Naive thymus-derived CD4-positive, alpha-beta T cell (primary cell): ENCODE measurements at regions of chr4 and their contacts with region 1.

Region 1: GRCh38 chr4:54941994-54942552 is 183.3 kb downstream of the KDR start:
- DNase-seq: peak in 8 of 9 donors; percentile 22 to 82 (median 71)
- ATAC-seq: peak; percentile 79
- H3K4me3 ChIP-seq: peak overlapping the region; percentile 36
- H3K4me3 Mint-ChIP-seq: peak overlapping the region; percentile 71 to 85 (median 79)
- H3K27ac ChIP-seq: peak overlapping the region; percentile 87
- H3K27ac Mint-ChIP-seq: peak overlapping the region; percentile 79 to 99 (median 97)
- H3K4me1 ChIP-seq: peaks cover 0 to 37% of the 10 kb centered on the region in 2 donors
- H3K4me1 Mint-ChIP-seq: peaks cover 27 to 77% (median 58%) of the 10 kb centered on the region in 7 donors
- H3K27me3 ChIP-seq: no peaks in the 10 kb centered on the region
- H3K27me3 Mint-ChIP-seq: peaks cover 0 to 5% (median 0%) of the 10 kb centered on the region in 5 donors

Region 2: GRCh38 chr4:53377319-53378170 is 1564.5 kb before region 1 on chr4 and contains the start of gene FIP1L1:
- CTCF ChIA-PET with region 1: no interaction called
- POLR2A ChIA-PET with region 1: no interaction called
- intact Hi-C with region 1: loop called in 1 of 2 experiments (anchors 5 kb)
- DNase-seq: peak; percentile 92 to 97 (median 96)
- ATAC-seq: peak; percentile 97
- H3K4me3 ChIP-seq: peak within 1 kb of the TSS; percentile 85
- H3K4me3 Mint-ChIP-seq: peak within 1 kb of the TSS; percentile 94 to 100 (median 99)
- H3K27ac ChIP-seq: peak within 1 kb of the TSS; percentile 89
- H3K27ac Mint-ChIP-seq: peak within 1 kb of the TSS; percentile 97 to 100 (median 99)
- H3K4me1 ChIP-seq: peaks cover 17 to 21% of the 10 kb centered on the region in 2 donors
- H3K4me1 Mint-ChIP-seq: peaks cover 20 to 53% (median 37%) of the 10 kb centered on the region in 7 donors
- H3K27me3 ChIP-seq: no peaks in the 10 kb centered on the region
- H3K27me3 Mint-ChIP-seq: peaks cover 0 to 15% (median 4%) of the 10 kb centered on the region in 5 donors
- total RNA-seq, gene FIP1L1: 57.1 to 91.0 (median 78.7) TPM

Region 3: GRCh38 chr4:54322818-54323417 is 619.2 kb before region 1 on chr4:
- CTCF ChIA-PET with region 1: no interaction called
- POLR2A ChIA-PET with region 1: no interaction called
- intact Hi-C with region 1: loop called in 1 of 2 experiments (anchors 5 kb)
- DNase-seq: peak in 8 of 9 donors; percentile 8 to 52 (median 42)
- ATAC-seq: peak; percentile 54
- H3K4me3 ChIP-seq: no peak overlapping the region
- H3K4me3 Mint-ChIP-seq: no peak overlapping the region
- H3K27ac ChIP-seq: no peak overlapping the region
- H3K27ac Mint-ChIP-seq: no peak overlapping the region
- H3K4me1 ChIP-seq: no peaks in the 10 kb centered on the region
- H3K4me1 Mint-ChIP-seq: peaks cover 0 to 12% (median 0%) of the 10 kb centered on the region in 7 donors
- H3K27me3 ChIP-seq: no peaks in the 10 kb centered on the region
- H3K27me3 Mint-ChIP-seq: peaks cover 0 to 3% (median 0%) of the 10 kb centered on the region in 5 donors

Region 4: DNA sequence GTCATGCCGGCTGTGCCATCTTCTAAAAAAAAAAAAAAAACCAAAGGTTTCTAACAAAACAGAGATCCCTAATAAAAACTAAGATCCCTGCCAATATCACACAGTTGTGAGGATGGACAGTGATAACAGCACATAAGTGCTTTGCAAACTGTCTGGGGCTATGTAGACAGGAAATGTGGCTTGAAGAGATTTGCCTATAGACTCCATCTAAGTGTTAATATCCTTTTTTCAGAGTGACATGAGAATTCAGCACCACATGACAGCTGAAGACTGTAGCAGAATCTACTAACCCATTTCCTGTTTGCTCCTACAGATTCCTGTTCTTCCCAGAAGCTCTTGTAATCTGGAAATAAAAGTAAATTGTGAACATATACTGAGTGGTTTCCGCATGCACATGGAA is 32.1 kb before region 1 on chr4:
- CTCF ChIA-PET with region 1: interaction called, 3 read pairs
- POLR2A ChIA-PET with region 1: interaction called, 4 read pairs
- intact Hi-C with region 1: loop called in 1 of 2 experiments (anchors 5 kb)
- DNase-seq: peak in 4 of 9 donors; percentile 3 to 12 (median 4)
- ATAC-seq: no peak
- H3K4me3 ChIP-seq: no peak overlapping the region
- H3K4me3 Mint-ChIP-seq: peak overlapping the region in 3 of 10 donors; percentile 2 to 24 (median 19)
- H3K27ac ChIP-seq: no peak overlapping the region
- H3K27ac Mint-ChIP-seq: peak overlapping the region in 4 of 9 donors; percentile 28 to 65 (median 52)
- H3K4me1 ChIP-seq: no peaks in the 10 kb centered on the region
- H3K4me1 Mint-ChIP-seq: peaks cover 0 to 21% (median 11%) of the 10 kb centered on the region in 7 donors
- H3K27me3 ChIP-seq: no peaks in the 10 kb centered on the region
- H3K27me3 Mint-ChIP-seq: no peaks in the 10 kb centered on the region

Region 5: DNA sequence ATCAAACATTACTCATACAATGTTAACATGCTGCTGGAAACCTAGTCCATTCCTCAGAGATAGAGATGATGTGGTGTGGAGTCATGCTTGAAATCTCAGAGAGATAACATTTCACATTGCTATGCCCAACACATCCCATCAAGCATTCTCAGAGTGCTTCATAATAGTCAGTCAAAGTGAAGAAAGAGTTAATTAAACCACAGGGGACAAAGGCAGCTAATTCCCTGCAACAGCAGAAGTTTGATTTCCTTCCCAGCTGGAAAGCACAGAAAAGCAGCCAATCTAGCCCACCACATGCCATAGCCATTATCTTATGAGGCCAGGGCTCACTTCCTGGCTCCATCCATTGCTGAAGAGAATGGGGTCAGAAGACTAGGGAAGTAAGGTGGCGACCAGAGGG is 174.4 kb after region 1 on chr4:
- CTCF ChIA-PET with region 1: no interaction called
- POLR2A ChIA-PET with region 1: no interaction called
- intact Hi-C with region 1: no loop called
- DNase-seq: no peak
- ATAC-seq: no peak
- H3K4me3 ChIP-seq: no peak overlapping the region
- H3K4me3 Mint-ChIP-seq: no peak overlapping the region
- H3K27ac ChIP-seq: no peak overlapping the region
- H3K27ac Mint-ChIP-seq: no peak overlapping the region
- H3K4me1 ChIP-seq: no peaks in the 10 kb centered on the region
- H3K4me1 Mint-ChIP-seq: no peaks in the 10 kb centered on the region
- H3K27me3 ChIP-seq: no peaks in the 10 kb centered on the region
- H3K27me3 Mint-ChIP-seq: peaks cover under 1 to 17% (median 12%) of the 10 kb centered on the region in 5 donors

Region 6: GRCh38 chr4:55395529-55396307 is 453.6 kb after region 1 on chr4 and contains the start of gene TMEM165:
- CTCF ChIA-PET with region 1: no interaction called
- POLR2A ChIA-PET with region 1: no interaction called
- intact Hi-C with region 1: loop called (anchors 2 to 10 kb)
- DNase-seq: peak; percentile 77 to 92 (median 87)
- ATAC-seq: peak; percentile 94
- H3K4me3 ChIP-seq: peak within 1 kb of the TSS; percentile 88
- H3K4me3 Mint-ChIP-seq: peak within 1 kb of the TSS; percentile 94 to 99 (median 96)
- H3K27ac ChIP-seq: peak within 1 kb of the TSS; percentile 89
- H3K27ac Mint-ChIP-seq: peak within 1 kb of the TSS; percentile 89 to 99 (median 96)
- H3K4me1 ChIP-seq: peaks cover 27 to 31% of the 10 kb centered on the region in 2 donors
- H3K4me1 Mint-ChIP-seq: peaks cover 29 to 49% (median 39%) of the 10 kb centered on the region in 7 donors
- H3K27me3 ChIP-seq: no peaks in the 10 kb centered on the region
- H3K27me3 Mint-ChIP-seq: no peaks in the 10 kb centered on the region
- total RNA-seq, gene TMEM165: 53.1 to 80.9 (median 58.9) TPM

Region 7: GRCh38 chr4:55574252-55574651 is 632.2 kb after region 1 on chr4:
- CTCF ChIA-PET with region 1: no interaction called
- POLR2A ChIA-PET with region 1: no interaction called
- intact Hi-C with region 1: no loop called
- DNase-seq: no peak
- ATAC-seq: no peak
- H3K4me3 ChIP-seq: no peak overlapping the region
- H3K4me3 Mint-ChIP-seq: no peak overlapping the region
- H3K27ac ChIP-seq: no peak overlapping the region
- H3K27ac Mint-ChIP-seq: no peak overlapping the region
- H3K4me1 ChIP-seq: no peaks in the 10 kb centered on the region
- H3K4me1 Mint-ChIP-seq: no peaks in the 10 kb centered on the region
- H3K27me3 ChIP-seq: no peaks in the 10 kb centered on the region
- H3K27me3 Mint-ChIP-seq: peaks cover 0 to 14% (median 6%) of the 10 kb centered on the region in 5 donors

Region 8: DNA sequence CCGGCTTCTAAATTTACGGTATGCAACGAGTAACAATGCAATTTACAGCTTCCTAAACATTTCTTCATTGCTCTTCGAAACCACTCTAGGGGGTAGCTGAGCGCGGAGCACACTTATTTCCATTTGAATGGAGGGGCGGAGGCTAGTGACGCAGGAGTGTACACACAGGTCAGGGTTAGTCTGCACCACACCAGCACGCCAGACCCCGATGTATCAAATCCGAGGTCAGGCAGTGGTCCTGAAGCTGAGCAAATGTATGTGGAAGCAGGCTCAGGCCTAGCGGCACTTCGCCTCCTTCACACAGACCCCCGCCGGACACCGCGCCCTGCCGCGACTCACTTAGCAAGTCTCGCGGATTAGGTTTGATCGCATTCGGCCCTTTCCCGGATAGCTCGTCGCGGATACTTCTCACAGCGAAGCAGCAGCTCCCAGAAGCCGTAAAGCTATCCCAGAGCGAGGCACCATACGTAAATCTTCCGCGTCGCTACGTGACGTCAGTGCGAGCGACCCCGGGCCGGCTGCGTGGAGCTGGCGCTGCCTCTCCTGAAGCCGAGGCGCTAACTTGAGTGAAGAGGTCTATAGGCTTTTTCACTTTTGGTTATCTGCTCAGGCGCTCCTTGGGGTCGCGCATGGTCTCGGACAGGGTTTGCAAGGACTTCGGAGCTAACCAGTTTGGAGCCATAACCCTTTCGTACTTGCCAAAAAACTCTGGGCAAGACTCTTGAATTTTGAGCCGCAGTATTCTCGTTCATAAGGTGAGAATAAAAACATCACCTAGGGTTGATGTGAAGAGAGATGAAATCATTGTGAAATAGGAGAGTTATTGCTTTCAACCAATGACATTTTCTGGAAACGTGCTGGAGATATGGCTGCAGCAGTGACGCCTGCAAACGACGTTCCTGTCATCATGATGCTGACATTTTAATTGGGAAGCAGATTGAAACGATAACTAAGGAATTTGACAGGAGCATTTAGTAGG is 1445.2 kb after region 1 on chr4 and contains the start of gene AASDH:
- CTCF ChIA-PET with region 1: no interaction called
- POLR2A ChIA-PET with region 1: interaction called, 3 read pairs
- intact Hi-C with region 1: loop called in 1 of 2 experiments (anchors 5 kb)
- DNase-seq: peak; percentile 92 to 98 (median 94)
- ATAC-seq: peak; percentile 95
- H3K4me3 ChIP-seq: peak within 1 kb of the TSS; percentile 94
- H3K4me3 Mint-ChIP-seq: peak within 1 kb of the TSS; percentile 87 to 99 (median 96)
- H3K27ac ChIP-seq: peak within 1 kb of the TSS; percentile 92
- H3K27ac Mint-ChIP-seq: peak within 1 kb of the TSS; percentile 97 to 100 (median 98)
- H3K4me1 ChIP-seq: peaks cover 15 to 18% of the 10 kb centered on the region in 2 donors
- H3K4me1 Mint-ChIP-seq: peaks cover 19 to 60% (median 47%) of the 10 kb centered on the region in 7 donors
- H3K27me3 ChIP-seq: no peaks in the 10 kb centered on the region
- H3K27me3 Mint-ChIP-seq: no peaks in the 10 kb centered on the region
- total RNA-seq, gene AASDH: 10.2 to 24.7 (median 15.8) TPM